ENCODE measurements at regions of chr1 and their contacts with region 1.

Region 1: DNA sequence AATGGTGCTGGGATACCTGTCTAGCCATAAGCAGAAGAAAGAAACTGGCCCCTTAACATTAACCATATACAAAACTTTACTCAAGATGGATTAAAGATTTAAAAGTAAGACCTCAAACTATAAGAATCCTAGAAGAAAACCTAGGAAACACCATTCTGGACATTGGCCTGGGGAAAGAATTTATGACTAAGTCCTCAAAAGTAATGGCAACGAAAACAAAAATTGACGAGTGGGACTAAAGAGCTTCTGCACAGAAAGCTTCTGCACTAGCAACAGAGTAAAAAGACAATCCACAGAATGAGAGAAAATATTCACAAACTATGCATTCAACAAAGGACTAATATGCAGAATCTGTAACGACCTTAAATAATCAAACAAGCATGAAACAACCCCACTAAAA is 66.7 kb downstream of the NME7 start:
- DNase-seq: no peak
- H3K4me3 Mint-ChIP-seq: no peak overlapping the region
- H3K27ac Mint-ChIP-seq: no peak overlapping the region
- H3K4me1 Mint-ChIP-seq: peaks cover 7% of the 10 kb centered on the region
- H3K27me3 Mint-ChIP-seq: no peaks in the 10 kb centered on the region
- CTCF ChIP-seq: no peak

Region 2: GRCh38 chr1:169234780-169235179 is 66.1 kb before region 1 on chr1:
- CTCF ChIA-PET with region 1: no interaction called
- intact Hi-C with region 1: loop called (anchors 5 kb)
- DNase-seq: no peak
- H3K4me3 Mint-ChIP-seq: no peak overlapping the region
- H3K27ac Mint-ChIP-seq: no peak overlapping the region
- H3K4me1 Mint-ChIP-seq: peaks cover 6% of the 10 kb centered on the region
- H3K27me3 Mint-ChIP-seq: no peaks in the 10 kb centered on the region
- CTCF ChIP-seq: no peak

Region 3: GRCh38 chr1:169245704-169246103 is 55.1 kb before region 1 on chr1:
- CTCF ChIA-PET with region 1: no interaction called
- intact Hi-C with region 1: no loop called
- DNase-seq: no peak
- H3K4me3 Mint-ChIP-seq: no peak overlapping the region
- H3K27ac Mint-ChIP-seq: no peak overlapping the region
- H3K4me1 Mint-ChIP-seq: peaks cover 10% of the 10 kb centered on the region
- H3K27me3 Mint-ChIP-seq: no peaks in the 10 kb centered on the region
- CTCF ChIP-seq: no peak

Measured in Calu3 (cell line).